Sciatic nerve (tissue), 2 donors: ENCODE measurements at regions of chr12 and their contacts with region 1.

Region 1: DNA sequence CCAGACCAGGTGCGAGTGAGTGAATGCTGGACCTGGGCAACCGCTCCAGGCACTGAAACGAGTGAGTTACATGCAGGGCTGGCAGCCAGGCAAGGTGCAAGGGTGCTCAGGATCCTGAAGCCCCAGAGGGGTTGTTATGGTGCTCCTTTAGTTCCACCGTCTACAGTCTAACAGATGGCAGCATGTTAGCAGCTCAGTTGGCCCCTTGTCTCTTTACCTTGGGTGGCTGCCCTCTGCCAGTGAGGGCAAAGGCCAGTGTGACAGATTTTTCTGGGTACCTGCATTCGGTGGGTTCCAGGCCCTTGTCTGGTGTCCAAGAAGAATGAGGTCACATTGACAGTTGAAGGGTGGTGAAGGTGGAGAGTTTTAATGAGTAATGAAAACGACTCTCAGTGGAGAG is 106.8 kb downstream of the SLCO1B3 start:
- DNase-seq: no peak
- ATAC-seq: no peak

Region 2: GRCh38 chr12:20245491-20245890 is 671.8 kb before region 1 on chr12:
- intact Hi-C with region 1: no loop called
- DNase-seq: no peak
- ATAC-seq: no peak

Region 3: DNA sequence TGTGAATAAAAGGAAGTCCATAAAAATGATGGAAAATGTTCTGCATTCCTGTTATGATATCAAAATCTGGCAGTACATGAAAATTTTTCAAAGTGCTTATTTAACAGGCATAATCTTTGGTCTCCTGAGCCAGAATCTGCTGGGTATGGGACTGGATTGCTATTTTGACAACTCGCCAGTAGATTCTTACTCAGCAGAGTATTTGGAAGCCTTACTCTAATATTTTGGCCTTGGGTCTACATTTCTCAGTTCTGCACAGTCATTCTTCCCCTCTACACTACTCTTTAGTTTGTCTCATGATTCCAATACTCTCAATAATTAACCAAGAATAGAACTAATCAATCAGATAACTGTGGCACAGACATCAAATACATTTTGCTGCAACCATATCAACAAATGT is 212.6 kb after region 1 on chr12:
- intact Hi-C with region 1: no loop called
- DNase-seq: no peak
- ATAC-seq: no peak

Region 4: GRCh38 chr12:21183721-21184275 is 266.5 kb after region 1 on chr12:
- intact Hi-C with region 1: loop called (anchors 5 kb)
- DNase-seq: no peak
- ATAC-seq: no peak